ENCODE measurements at regions of chr7 and their contacts with region 1.

Region 1: DNA sequence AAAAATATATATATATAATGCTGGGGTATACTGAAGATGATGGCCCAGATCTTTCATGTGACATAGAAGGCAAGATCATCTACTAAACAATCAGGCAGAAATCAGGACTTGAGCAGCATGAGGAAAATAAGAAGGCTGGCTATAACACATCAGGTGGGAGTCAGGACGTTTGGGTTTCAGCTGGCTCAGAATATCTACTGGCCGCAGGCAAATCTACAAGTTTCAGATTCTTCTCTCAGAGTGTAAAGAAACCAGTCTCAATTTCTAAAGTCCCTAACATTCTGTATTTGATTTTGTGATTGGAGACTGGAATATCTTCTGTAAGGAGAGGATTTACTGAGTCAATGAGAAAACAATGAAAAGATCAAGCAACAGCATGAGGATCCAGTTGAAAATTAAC is 37.7 kb upstream of the FAM3C start:
- DNase-seq: no peak
- ATAC-seq: no peak
- H3K4me3 ChIP-seq: no peak overlapping the region
- H3K4me3 Mint-ChIP-seq: no peak overlapping the region
- H3K27ac ChIP-seq: no peak overlapping the region
- H3K27ac Mint-ChIP-seq: no peak overlapping the region
- H3K4me1 ChIP-seq: peaks cover 17 to 25% of the 10 kb centered on the region in 2 donors
- H3K4me1 Mint-ChIP-seq: peaks cover 25% of the 10 kb centered on the region
- H3K27me3 ChIP-seq: no peaks in the 10 kb centered on the region
- H3K27me3 Mint-ChIP-seq: no peaks in the 10 kb centered on the region
- CTCF ChIP-seq: no peak

Region 2: DNA sequence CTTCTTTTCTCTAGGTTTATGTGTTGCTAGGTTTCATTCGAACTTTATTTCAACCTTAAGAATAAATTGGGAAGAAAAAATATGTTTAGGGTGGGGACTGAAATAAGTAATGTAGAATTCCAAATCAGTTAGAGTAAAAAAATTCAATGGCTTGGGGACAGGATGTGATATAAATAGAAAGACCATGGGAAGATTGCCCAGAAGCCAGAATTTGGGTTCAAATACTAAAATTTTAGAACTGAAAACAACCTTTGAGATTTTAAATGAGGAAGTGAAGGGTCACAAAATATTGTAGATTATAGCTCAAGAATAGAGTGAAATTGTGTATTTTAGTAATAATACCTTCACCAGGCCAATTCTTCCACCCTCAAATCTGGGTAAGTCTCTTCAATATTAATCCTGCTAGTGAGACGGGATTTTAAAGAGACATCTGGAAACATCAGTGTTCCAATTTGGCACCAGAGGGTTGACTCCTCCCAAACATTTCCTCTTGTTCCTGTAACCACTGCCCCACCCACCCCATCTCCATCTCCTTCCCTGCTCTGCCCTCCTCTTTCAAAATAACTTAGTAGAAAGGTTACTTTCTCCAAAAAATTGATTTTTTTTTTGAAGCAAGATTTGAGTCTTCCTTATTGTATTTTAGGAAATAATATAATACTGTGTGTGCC is 13.6 kb after region 1 on chr7:
- CTCF ChIA-PET with region 1: interaction called, 3 read pairs
- POLR2A ChIA-PET with region 1: interaction called, 3 read pairs
- intact Hi-C with region 1: loop called (anchors 1 kb)
- DNase-seq: no peak
- ATAC-seq: no peak
- H3K4me3 ChIP-seq: no peak overlapping the region
- H3K4me3 Mint-ChIP-seq: no peak overlapping the region
- H3K27ac ChIP-seq: no peak overlapping the region
- H3K27ac Mint-ChIP-seq: no peak overlapping the region
- H3K4me1 ChIP-seq: peaks cover 6 to 12% of the 10 kb centered on the region in 2 donors
- H3K4me1 Mint-ChIP-seq: peaks cover 13% of the 10 kb centered on the region
- H3K27me3 ChIP-seq: no peaks in the 10 kb centered on the region
- H3K27me3 Mint-ChIP-seq: no peaks in the 10 kb centered on the region
- CTCF ChIP-seq: no peak

Region 3: GRCh38 chr7:122068999-122069398 is 635.2 kb after region 1 on chr7:
- CTCF ChIA-PET with region 1: no interaction called
- POLR2A ChIA-PET with region 1: no interaction called
- intact Hi-C with region 1: no loop called
- DNase-seq: no peak
- ATAC-seq: no peak
- H3K4me3 ChIP-seq: no peak overlapping the region
- H3K4me3 Mint-ChIP-seq: no peak overlapping the region
- H3K27ac ChIP-seq: no peak overlapping the region
- H3K27ac Mint-ChIP-seq: no peak overlapping the region
- H3K4me1 ChIP-seq: no peaks in the 10 kb centered on the region
- H3K4me1 Mint-ChIP-seq: no peaks in the 10 kb centered on the region
- H3K27me3 ChIP-seq: no peaks in the 10 kb centered on the region
- H3K27me3 Mint-ChIP-seq: no peaks in the 10 kb centered on the region
- CTCF ChIP-seq: no peak

Measured in B cell (primary cell).